Activated B cell treated with CpG ODN at 0.5 μM for 24 hours (primary cell): ENCODE measurements at regions of chr12 and their contacts with region 1.

Region 1: DNA sequence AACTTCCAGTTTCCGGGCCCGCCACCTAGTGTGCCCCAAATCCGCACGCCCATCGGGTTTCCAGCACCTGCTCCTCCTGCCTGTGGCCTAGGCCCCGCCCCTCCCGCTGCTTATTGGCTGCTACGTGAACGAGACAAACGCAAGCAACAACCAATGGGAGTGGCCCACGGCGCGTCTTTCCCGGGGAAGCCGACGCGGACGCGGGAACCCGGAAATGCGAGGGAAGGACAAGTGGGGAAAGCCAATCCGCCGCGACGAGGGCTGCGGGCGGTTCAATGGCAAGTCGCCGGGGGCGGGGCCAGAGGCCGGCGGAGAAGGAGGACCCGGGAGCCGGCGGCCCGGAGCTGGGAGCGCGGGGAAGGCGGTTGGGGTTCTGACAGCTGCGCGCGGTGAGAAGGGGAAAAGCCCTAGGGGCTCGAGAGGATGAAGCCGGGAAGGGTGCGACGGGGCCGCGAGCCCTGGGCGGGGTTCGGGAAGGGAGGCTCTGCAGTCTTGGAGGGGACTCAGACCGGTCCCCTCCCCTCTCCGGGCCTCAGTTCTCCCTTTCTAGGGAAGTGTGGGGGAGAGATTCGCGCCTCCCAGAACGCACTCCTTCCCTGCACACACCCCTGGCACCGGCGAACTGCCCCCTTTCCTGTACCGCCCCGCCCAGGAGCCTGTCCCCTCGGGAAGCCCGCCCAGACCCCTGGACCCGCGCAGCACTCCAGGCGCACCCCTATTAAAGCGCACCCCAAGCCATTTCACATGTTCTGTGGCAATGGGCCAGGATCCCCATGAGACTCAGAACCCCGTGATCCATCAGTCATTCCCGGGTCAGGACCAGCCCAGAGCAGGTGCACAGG is at the start of gene FICD:
- DNase-seq: peak; percentile 92
- ATAC-seq: peak; percentile 92
- H3K4me3 Mint-ChIP-seq: peak within 1 kb of the TSS; percentile 95
- H3K27ac Mint-ChIP-seq: peak within 1 kb of the TSS; percentile 84
- H3K4me1 Mint-ChIP-seq: peaks cover 36% of the 10 kb centered on the region
- H3K27me3 Mint-ChIP-seq: no peaks in the 10 kb centered on the region
- CTCF ChIP-seq: no peak
- total RNA-seq, gene FICD: 7.7 and 11.2 TPM in 2 replicates

Region 2: DNA sequence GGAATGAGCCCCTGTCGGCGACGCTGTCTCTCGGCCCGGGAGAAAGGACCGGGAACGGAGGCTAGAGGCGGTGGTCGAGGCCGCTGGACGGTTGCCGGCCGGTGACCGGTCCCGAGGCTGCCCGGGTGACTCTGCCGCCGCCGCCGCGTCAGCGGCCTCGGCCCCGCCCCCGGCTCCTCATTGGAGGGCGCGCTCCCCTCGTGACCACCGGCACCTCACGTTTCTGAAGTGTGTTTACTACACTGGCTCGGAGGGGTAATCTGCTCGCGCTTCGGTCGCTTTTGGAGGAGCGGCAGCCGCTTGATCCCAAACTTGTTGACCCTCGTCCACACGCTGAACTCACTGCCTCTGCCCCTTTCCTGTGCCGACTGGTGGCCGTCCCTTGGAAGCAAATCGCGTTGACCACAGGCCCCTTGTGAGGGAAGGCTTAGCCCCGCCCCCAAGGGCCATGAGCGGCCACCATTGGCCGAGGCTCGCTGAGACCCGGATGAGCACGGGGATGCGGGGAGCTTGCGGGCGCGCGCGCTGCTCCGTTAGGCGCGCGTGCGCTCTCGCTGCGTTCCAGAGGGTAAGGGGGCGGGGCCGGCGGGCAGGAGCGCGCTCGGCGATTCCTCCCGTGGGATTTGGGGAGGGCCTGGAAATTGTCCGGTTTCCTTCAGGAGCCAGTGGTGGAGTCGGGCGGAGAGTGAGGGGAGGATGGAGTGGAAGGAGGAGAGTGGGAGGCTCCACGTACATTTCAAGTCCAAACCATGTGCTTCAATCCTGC is 1421.6 kb before region 1 on chr12 and contains the start of gene CRY1:
- CTCF ChIA-PET with region 1: no interaction called
- POLR2A ChIA-PET with region 1: no interaction called
- intact Hi-C with region 1: loop called (anchors 5 kb)
- DNase-seq: peak; percentile 84
- ATAC-seq: peak; percentile 83
- H3K4me3 Mint-ChIP-seq: no peak within 1 kb of the TSS
- H3K27ac Mint-ChIP-seq: no peak within 1 kb of the TSS
- H3K4me1 Mint-ChIP-seq: peaks cover 6% of the 10 kb centered on the region
- H3K27me3 Mint-ChIP-seq: peaks cover 8% of the 10 kb centered on the region
- CTCF ChIP-seq: no peak
- total RNA-seq, gene CRY1: 4.6 and 7.1 TPM in 2 replicates

Region 3: GRCh38 chr12:107760809-107761501 is 754.2 kb before region 1 on chr12 and contains the start of gene PRDM4:
- CTCF ChIA-PET with region 1: no interaction called
- POLR2A ChIA-PET with region 1: no interaction called
- intact Hi-C with region 1: loop called (anchors 1 kb)
- DNase-seq: peak; percentile 93
- ATAC-seq: peak; percentile 91
- H3K4me3 Mint-ChIP-seq: peak within 1 kb of the TSS; percentile 89
- H3K27ac Mint-ChIP-seq: peak within 1 kb of the TSS; percentile 86
- H3K4me1 Mint-ChIP-seq: peaks cover 33% of the 10 kb centered on the region
- H3K27me3 Mint-ChIP-seq: no peaks in the 10 kb centered on the region
- CTCF ChIP-seq: no peak
- total RNA-seq, gene PRDM4: 37.8 and 45.2 TPM in 2 replicates

Region 4: DNA sequence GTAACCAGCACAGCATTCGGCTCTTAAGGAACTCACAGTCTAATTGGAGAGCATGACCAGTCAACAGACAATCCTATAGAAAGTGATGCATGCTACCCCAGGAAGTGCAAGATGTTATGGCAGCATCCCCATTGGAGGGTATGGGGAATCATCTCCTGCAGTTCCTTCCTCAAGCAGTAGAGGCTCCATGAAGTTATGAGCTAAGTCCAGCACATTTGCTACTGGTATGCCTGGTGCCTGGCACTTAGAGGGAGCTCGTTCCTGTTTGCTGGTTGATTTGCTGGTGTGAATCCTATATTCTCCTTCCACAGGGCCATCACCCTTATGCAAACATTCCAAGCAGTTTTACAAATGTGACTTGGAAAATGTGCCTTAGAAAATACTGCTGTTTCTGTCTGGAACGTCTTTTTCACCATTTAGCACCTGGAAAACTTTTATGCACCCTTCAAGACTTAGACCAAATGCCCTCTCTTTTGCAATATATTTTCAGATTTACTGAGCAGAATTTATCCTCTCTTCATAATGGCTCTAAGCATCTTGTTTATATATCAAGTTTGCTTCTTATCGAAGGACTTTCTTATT is 522.2 kb before region 1 on chr12:
- CTCF ChIA-PET with region 1: interaction called, 21 read pairs
- POLR2A ChIA-PET with region 1: no interaction called
- intact Hi-C with region 1: loop called (anchors 1 kb)
- DNase-seq: no peak
- ATAC-seq: peak; percentile 31
- H3K4me3 Mint-ChIP-seq: no peak overlapping the region
- H3K27ac Mint-ChIP-seq: no peak overlapping the region
- H3K4me1 Mint-ChIP-seq: no peaks in the 10 kb centered on the region
- H3K27me3 Mint-ChIP-seq: peaks cover 29% of the 10 kb centered on the region
- CTCF ChIP-seq: no peak

Region 5: DNA sequence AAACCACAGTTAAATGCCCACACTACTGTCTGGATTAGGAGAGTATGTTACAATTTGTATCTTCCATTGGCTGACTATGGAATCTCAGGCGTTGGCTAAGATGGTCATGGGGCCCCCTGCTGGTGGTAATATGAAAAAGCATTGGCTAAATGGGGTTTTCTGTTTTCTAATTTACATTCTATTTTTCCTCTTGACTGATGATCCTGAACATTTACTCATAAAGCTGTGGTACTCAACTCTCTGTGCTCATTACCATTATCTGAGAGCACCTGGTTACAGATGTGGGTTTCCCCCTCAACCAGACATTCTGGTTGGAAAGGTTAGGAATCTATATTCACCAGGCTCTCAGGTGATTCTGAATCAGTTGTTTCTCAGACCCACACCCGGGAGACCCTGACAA is 321.3 kb before region 1 on chr12:
- CTCF ChIA-PET with region 1: no interaction called
- POLR2A ChIA-PET with region 1: no interaction called
- intact Hi-C with region 1: loop called (anchors 10 kb)
- DNase-seq: no peak
- ATAC-seq: peak; percentile 66
- H3K4me3 Mint-ChIP-seq: no peak overlapping the region
- H3K27ac Mint-ChIP-seq: no peak overlapping the region
- H3K4me1 Mint-ChIP-seq: peaks cover 13% of the 10 kb centered on the region
- H3K27me3 Mint-ChIP-seq: no peaks in the 10 kb centered on the region
- CTCF ChIP-seq: no peak

Region 6: DNA sequence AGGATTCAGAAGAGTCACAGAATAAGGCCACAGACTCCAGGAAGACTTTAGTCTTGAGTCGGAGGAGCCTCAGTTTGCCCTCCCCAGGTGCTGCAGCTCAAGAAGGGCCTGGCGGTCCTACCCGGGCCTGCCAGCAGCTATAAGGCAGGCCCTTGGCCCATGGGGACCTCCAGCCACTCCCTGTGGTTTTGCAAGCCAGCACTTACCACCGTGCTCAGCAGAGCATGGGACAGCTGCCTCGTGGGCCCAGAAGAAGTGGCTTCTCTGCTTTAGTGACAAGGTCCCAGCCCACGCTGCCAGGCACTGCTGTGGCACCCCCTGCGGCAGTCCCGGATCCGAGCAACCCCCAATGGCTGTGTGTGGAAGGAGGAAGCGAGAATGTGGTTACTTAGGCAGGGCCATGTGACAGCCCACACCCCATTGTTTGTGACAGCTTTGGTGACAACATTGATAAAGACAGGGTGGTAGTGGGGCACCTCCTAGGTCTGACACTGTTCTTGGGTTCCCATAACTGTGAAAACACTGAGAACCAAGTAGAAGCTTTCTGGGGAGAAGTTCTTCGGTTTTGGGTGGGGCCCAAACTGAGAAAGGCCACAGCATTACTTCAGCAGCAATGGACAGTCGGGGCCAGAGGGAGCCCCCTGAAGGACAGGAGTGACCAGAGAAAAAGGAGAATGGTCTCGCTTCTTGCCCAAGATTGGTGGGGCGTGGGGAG is 118.5 kb after region 1 on chr12 and contains the start of gene SELPLG:
- CTCF ChIA-PET with region 1: no interaction called
- POLR2A ChIA-PET with region 1: no interaction called
- intact Hi-C with region 1: loop called (anchors 5 kb)
- DNase-seq: peak; percentile 79
- ATAC-seq: peak; percentile 76
- H3K4me3 Mint-ChIP-seq: peak within 1 kb of the TSS; percentile 85
- H3K27ac Mint-ChIP-seq: peak within 1 kb of the TSS; percentile 98
- H3K4me1 Mint-ChIP-seq: peaks cover 95% of the 10 kb centered on the region
- H3K27me3 Mint-ChIP-seq: no peaks in the 10 kb centered on the region
- CTCF ChIP-seq: no peak
- total RNA-seq, gene SELPLG: 1.8 and 2.0 TPM in 2 replicates

Region 7: DNA sequence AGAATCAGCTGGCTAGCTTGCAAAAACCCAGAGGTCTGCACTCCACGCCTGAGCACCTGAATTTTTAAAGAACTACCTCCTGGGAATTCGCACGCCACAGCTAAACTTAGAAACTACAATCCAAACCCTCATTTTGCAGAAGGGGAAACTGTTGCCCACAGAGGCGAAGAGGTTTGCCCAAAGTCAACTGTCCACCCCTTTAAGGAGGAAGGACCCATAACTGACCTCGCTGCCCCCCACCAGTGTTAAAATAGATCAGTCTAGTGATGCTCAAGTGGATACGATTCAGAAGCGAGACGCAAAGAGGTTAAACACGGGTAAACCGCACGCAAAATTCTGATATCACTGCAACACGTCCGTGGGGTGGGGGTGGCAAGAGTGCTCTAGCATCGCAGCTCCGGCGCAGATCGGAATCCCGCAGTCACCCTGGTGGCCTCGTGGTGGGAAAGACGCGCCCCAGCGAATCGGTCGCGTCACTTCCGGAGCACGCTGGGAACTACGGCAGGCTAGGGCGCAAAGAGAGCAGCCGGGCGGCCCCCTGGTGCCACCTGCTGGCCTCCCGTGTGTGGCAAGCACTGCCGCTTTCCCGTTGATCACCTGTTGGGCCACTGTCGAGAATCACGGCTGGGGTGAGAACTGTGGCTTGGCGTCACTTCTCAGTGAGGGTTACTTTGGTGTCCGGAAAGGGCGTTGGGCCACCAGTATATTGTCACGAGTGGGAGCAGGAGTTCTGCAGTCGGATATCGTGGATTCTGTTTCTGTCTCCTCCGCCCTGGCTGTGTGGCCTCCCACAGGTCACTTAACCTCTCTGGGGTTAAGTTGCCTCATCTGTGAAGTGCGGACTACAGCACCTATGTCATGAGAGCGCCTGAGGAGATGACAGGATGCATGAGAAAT is 578.1 kb after region 1 on chr12 and contains the start of gene ALKBH2:
- CTCF ChIA-PET with region 1: no interaction called
- POLR2A ChIA-PET with region 1: no interaction called
- intact Hi-C with region 1: loop called (anchors 1 kb)
- DNase-seq: peak; percentile 90
- ATAC-seq: peak; percentile 68
- H3K4me3 Mint-ChIP-seq: peak within 1 kb of the TSS; percentile 88
- H3K27ac Mint-ChIP-seq: peak within 1 kb of the TSS; percentile 92
- H3K4me1 Mint-ChIP-seq: peaks cover 33% of the 10 kb centered on the region
- H3K27me3 Mint-ChIP-seq: no peaks in the 10 kb centered on the region
- CTCF ChIP-seq: peak; percentile 92
- total RNA-seq, gene ALKBH2: 21.3 and 24.1 TPM in 2 replicates